Activated CD4-positive, alpha-beta memory T cell treated with anti-CD3 and anti-CD28 coated beads for 36 hours (primary cell): ENCODE measurements at regions of chr20 and their contacts with region 1.

Region 1: GRCh38 chr20:50101887-50102286 is 11.1 kb downstream of the UBE2V1 start:
- DNase-seq: no peak
- H3K4me3 Mint-ChIP-seq: no peak overlapping the region
- H3K27ac Mint-ChIP-seq: peak overlapping the region; percentile 8
- H3K4me1 Mint-ChIP-seq: peaks cover 49% of the 10 kb centered on the region
- H3K27me3 Mint-ChIP-seq: no peaks in the 10 kb centered on the region

Region 2: GRCh38 chr20:49186535-49187329 is 915.2 kb before region 1 on chr20:
- CTCF ChIA-PET with region 1: no interaction called
- POLR2A ChIA-PET with region 1: no interaction called
- intact Hi-C with region 1: no loop called
- DNase-seq: peak; percentile 79
- H3K4me3 Mint-ChIP-seq: peak overlapping the region; percentile 87
- H3K27ac Mint-ChIP-seq: peak overlapping the region; percentile 89
- H3K4me1 Mint-ChIP-seq: peaks cover 48% of the 10 kb centered on the region
- H3K27me3 Mint-ChIP-seq: no peaks in the 10 kb centered on the region

Region 3: DNA sequence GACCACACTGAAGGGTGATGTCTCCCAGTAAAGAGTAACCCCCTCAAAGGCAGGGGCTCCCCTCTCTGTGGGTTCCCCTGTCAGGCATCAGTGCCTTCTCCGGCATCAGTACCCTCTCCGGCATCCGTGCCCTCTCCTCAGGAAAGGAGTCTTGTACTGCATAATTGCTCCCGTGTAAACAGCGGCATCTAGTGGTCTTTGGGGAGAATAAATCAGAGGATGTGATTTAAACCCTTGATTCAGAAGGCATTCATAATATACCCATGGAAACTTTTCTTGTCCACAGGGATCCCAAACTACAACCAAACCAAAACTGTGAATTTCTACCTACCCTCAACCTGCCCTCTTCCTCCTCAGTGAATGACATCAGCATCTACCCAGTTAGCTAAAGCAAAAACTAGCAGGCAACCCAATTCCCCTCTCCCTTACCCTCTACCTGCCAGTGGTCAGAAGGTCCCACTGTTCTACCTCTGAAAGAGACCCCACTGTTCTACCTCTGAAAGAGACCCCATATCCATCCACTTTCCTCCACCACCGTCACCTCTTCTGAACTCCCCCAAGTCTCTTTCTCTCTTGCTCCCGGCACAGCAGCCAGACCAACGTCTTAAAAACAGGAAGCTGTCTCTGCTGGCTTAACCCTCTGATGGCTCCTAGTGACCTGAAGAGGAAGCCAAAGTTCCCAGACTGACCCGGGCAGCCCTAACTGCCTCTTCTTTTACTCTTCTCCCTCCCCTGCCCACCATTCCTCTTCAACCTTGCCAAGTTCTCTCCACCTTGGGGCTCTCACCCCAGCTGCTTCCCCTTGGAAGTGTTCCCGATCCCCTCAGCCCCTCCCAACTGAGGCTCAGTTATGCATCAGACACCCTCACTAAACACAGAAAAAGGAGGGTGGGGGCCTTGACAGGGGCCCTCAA is 16.2 kb before region 1 on chr20:
- CTCF ChIA-PET with region 1: interaction called, 24 read pairs
- POLR2A ChIA-PET with region 1: no interaction called
- intact Hi-C with region 1: no loop called
- DNase-seq: peak; percentile 36
- H3K4me3 Mint-ChIP-seq: no peak overlapping the region
- H3K27ac Mint-ChIP-seq: peak overlapping the region; percentile 39
- H3K4me1 Mint-ChIP-seq: peaks cover 31% of the 10 kb centered on the region
- H3K27me3 Mint-ChIP-seq: no peaks in the 10 kb centered on the region